CD8-positive, alpha-beta T cell (primary cell): ENCODE measurements at regions of chr3 and their contacts with region 1.

Region 1: DNA sequence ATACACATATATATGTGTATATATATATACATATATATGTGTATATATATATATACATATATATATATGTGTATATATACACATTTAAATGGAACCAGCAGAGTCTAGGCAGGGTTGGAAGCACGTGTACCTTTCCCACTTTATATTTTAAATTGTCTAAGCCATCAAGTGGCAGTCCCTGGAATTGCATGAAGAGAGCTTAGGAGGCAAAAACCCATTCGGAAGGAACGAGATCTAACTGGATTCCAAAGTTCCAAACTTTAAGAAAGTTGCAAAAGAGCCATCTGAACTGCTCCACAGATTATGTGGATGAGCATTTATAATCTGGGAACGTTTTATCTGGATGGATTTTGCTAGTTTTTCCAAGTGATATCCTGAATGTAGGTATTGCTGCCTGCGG is 186.5 kb downstream of the FOXP1 start:
- DNase-seq: peak in 2 of 9 experiments; percentile 30 to 47
- ATAC-seq: no peak
- H3K4me3 ChIP-seq: no peak overlapping the region
- H3K4me3 Mint-ChIP-seq: no peak overlapping the region
- H3K27ac ChIP-seq: no peak overlapping the region
- H3K27ac Mint-ChIP-seq: peak overlapping the region; percentile 92
- H3K4me1 ChIP-seq: peaks cover 76% of the 10 kb centered on the region
- H3K4me1 Mint-ChIP-seq: peaks cover 81% of the 10 kb centered on the region
- H3K27me3 ChIP-seq: no peaks in the 10 kb centered on the region
- H3K27me3 Mint-ChIP-seq: no peaks in the 10 kb centered on the region
- CTCF ChIP-seq: no peak

Region 2: GRCh38 chr3:71380096-71380495 is 16.9 kb before region 1 on chr3:
- CTCF ChIA-PET with region 1: interaction called, 7 read pairs
- POLR2A ChIA-PET with region 1: interaction called, 4 read pairs
- intact Hi-C with region 1: loop called in 1 of 2 experiments (anchors 2 kb)
- DNase-seq: no peak
- ATAC-seq: no peak
- H3K4me3 ChIP-seq: no peak overlapping the region
- H3K4me3 Mint-ChIP-seq: no peak overlapping the region
- H3K27ac ChIP-seq: no peak overlapping the region
- H3K27ac Mint-ChIP-seq: no peak overlapping the region
- H3K4me1 ChIP-seq: peaks cover 75% of the 10 kb centered on the region
- H3K4me1 Mint-ChIP-seq: peaks cover 84% of the 10 kb centered on the region
- H3K27me3 ChIP-seq: no peaks in the 10 kb centered on the region
- H3K27me3 Mint-ChIP-seq: no peaks in the 10 kb centered on the region
- CTCF ChIP-seq: no peak

Region 3: GRCh38 chr3:71416876-71417275 is 19.8 kb after region 1 on chr3:
- CTCF ChIA-PET with region 1: interaction called, 6 read pairs
- POLR2A ChIA-PET with region 1: interaction called, 4 read pairs
- intact Hi-C with region 1: loop called in 1 of 2 experiments (anchors 2 kb)
- DNase-seq: peak in 6 of 9 experiments; percentile 41 to 82 (median 60)
- ATAC-seq: peak; percentile 67
- H3K4me3 ChIP-seq: peak overlapping the region in 1 of 2 experiments; percentile 11
- H3K4me3 Mint-ChIP-seq: peak overlapping the region; percentile 54
- H3K27ac ChIP-seq: peak overlapping the region; percentile 60 to 63
- H3K27ac Mint-ChIP-seq: peak overlapping the region; percentile 93
- H3K4me1 ChIP-seq: peaks cover 81% of the 10 kb centered on the region
- H3K4me1 Mint-ChIP-seq: peaks cover 92% of the 10 kb centered on the region
- H3K27me3 ChIP-seq: no peaks in the 10 kb centered on the region
- H3K27me3 Mint-ChIP-seq: no peaks in the 10 kb centered on the region
- CTCF ChIP-seq: peak; percentile 31

Region 4: DNA sequence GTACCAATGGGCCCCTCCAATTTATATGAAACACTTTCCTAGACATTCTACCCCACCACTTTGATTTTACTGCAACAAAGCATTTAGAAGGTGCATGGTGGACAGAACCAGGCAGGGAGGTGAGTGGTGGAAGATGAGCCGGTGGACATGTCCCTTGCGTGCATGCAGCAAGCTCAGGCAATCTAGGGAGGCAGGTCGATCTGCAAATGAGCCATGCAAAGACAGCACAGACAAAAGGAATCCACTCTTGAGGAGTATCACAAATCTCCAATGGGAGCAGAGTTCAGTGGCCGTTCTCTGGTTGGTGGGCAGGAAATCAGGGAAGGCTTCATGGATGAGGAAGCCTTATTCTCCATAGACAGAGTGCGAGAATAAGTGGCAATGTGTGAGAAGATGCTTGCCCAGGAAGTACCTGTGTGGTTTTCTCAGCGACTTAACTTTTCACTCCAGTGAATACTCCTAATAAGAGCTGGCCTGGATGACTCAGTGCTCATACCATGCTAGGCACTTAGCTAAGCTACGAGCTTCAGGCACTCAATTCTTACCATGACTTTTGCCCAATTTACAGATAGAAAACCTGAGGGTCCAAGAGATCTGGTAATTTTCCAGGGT is 34.0 kb after region 1 on chr3:
- CTCF ChIA-PET with region 1: no interaction called
- POLR2A ChIA-PET with region 1: no interaction called
- intact Hi-C with region 1: loop called in 1 of 2 experiments (anchors 5 kb)
- DNase-seq: peak in 2 of 9 experiments; percentile 43 to 46
- ATAC-seq: peak; percentile 57
- H3K4me3 ChIP-seq: no peak overlapping the region
- H3K4me3 Mint-ChIP-seq: peak overlapping the region; percentile 26
- H3K27ac ChIP-seq: peak overlapping the region; percentile 6 to 49
- H3K27ac Mint-ChIP-seq: peak overlapping the region; percentile 95
- H3K4me1 ChIP-seq: peaks cover 85% of the 10 kb centered on the region
- H3K4me1 Mint-ChIP-seq: peaks cover 87% of the 10 kb centered on the region
- H3K27me3 ChIP-seq: no peaks in the 10 kb centered on the region
- H3K27me3 Mint-ChIP-seq: no peaks in the 10 kb centered on the region
- CTCF ChIP-seq: no peak